ENCODE measurements at regions of chr11 and their contacts with region 1.

Region 1: GRCh38 chr11:30322826-30323710 is at the start of gene ARL14EP:
- DNase-seq: peak; percentile 94
- H3K4me3 ChIP-seq: peak within 1 kb of the TSS; percentile 53 to 88 (median 62)
- H3K27ac ChIP-seq: peak within 1 kb of the TSS; percentile 93
- H3K4me1 ChIP-seq: peaks cover 10% of the 10 kb centered on the region
- H3K27me3 ChIP-seq: peaks cover 3 to 8% of the 10 kb centered on the region in 2 experiments
- CTCF ChIP-seq: no peak
- POLR2A ChIP-seq: peak; percentile 86
- total RNA-seq, gene ARL14EP: 14.8 and 16.7 TPM in 2 replicates

Region 2: DNA sequence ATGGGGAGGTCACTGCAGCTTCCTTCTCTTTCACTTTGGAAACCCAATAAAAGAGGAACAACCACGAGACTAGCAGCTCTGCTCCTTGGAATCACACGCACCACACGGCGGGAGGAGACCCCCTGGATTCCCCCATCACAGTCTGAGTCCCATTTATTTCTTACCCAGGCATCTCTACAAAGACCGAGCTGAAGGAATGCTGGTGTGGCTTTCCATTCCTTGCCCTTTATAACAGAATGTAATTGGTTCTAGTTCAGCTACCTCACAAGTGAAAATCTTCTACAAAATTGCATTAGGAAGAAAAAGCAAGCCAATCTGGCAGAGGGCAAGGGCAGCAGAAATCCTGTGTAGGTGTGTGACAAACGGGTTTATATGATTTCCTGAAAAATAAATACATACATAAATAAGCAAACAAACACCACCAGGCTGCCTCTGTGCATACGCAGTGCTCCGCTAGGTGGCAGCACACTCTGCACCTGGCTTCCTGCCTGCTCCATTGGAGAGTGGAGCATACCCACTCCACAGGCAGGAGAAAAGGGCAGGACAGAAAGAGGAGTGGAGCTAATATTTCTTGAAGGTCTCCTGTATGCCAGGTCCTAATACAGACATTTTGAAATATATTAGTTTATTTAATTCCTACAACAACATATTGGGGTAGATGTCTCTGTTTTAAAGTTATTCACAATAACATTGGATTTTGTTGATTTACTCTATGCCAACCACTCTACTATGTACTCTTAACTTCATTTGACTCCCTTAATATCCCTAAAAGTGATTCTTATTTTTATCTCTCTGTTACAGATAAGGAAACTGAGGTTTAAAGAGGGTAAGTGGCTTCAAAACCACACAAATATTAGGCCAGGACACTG is 979.4 kb before region 1 on chr11:
- CTCF ChIA-PET with region 1: no interaction called
- POLR2A ChIA-PET with region 1: no interaction called
- dilution Hi-C with region 1: no loop called
- intact Hi-C with region 1: loop called (anchors 10 kb)
- DNase-seq: peak; percentile 58
- H3K4me3 ChIP-seq: no peak overlapping the region
- H3K27ac ChIP-seq: no peak overlapping the region
- H3K4me1 ChIP-seq: no peaks in the 10 kb centered on the region
- H3K27me3 ChIP-seq: no peaks in the 10 kb centered on the region
- CTCF ChIP-seq: peak; percentile 88 to 94
- POLR2A ChIP-seq: no peak

Region 3: DNA sequence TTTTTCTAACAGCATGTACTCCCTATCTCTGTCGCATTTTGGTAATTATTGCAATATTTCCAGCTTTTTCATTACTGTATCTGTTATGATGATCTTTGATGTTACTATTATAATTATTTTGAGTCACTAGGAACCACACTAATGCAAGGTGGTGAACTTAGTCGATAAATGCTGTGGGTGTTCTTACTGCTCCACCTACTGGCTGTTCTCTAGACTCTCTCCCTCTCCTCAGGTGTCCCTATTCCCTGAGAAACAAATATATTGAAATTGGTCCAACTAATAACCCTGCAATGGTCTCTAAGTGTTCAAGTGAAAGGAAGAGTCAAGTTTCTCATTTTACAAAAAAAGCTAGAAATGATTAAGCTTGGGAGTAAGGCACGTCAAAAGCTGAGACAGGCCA is 10.3 kb after region 1 on chr11:
- CTCF ChIA-PET with region 1: interaction called, 10 read pairs
- POLR2A ChIA-PET with region 1: interaction called, 6 read pairs
- dilution Hi-C with region 1: no loop called
- intact Hi-C with region 1: no loop called
- DNase-seq: no peak
- H3K4me3 ChIP-seq: no peak overlapping the region
- H3K27ac ChIP-seq: no peak overlapping the region
- H3K4me1 ChIP-seq: no peaks in the 10 kb centered on the region
- H3K27me3 ChIP-seq: no peaks in the 10 kb centered on the region
- CTCF ChIP-seq: peak in 1 of 2 donors; percentile 37
- POLR2A ChIP-seq: no peak

Region 4: DNA sequence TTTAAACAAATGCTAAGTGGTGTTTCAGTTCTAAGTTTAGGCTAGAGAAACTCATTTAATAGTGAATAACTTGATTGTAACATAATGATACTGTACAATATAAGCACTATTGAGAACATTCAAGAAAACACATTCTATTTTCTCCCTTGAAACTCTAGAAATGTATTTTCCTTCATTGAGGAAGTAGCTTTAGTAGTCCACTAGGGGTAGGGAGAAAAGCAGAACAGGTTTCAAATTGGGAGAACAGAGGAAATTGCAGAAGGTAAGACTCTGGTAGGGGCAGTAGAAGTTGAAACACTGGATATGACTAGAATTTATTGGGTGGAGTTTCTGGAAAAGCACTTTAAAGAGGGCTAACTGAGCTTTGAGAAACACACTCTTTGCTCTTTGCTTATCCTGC is 294.7 kb after region 1 on chr11:
- CTCF ChIA-PET with region 1: no interaction called
- POLR2A ChIA-PET with region 1: no interaction called
- dilution Hi-C with region 1: no loop called
- intact Hi-C with region 1: no loop called
- DNase-seq: no peak
- H3K4me3 ChIP-seq: no peak overlapping the region
- H3K27ac ChIP-seq: no peak overlapping the region
- H3K4me1 ChIP-seq: no peaks in the 10 kb centered on the region
- H3K27me3 ChIP-seq: no peaks in the 10 kb centered on the region
- CTCF ChIP-seq: no peak
- POLR2A ChIP-seq: no peak

Region 5: DNA sequence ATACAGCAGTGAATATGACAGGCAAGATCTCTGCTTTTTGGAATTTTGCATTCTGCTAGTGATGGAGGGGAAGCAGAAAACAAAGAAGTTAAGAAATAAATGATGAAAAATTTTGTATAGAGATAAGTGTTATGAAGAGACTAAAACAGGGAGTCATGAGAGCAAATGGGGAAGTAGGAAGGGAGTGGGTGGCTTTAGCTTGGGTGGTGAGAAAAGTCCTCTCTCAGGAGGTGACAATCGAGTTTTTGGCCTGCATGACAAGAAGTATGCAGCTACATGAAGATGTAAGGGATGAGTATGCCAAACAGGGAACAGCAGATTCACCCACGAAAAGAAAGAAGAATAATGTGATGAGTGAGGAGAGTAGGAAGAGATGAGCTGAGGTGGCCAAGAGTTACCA is 343.7 kb after region 1 on chr11:
- CTCF ChIA-PET with region 1: no interaction called
- POLR2A ChIA-PET with region 1: no interaction called
- dilution Hi-C with region 1: no loop called
- intact Hi-C with region 1: no loop called
- DNase-seq: no peak
- H3K4me3 ChIP-seq: no peak overlapping the region
- H3K27ac ChIP-seq: no peak overlapping the region
- H3K4me1 ChIP-seq: no peaks in the 10 kb centered on the region
- H3K27me3 ChIP-seq: no peaks in the 10 kb centered on the region
- CTCF ChIP-seq: no peak
- POLR2A ChIP-seq: no peak

Region 6: GRCh38 chr11:30758012-30758411 is 434.9 kb after region 1 on chr11:
- CTCF ChIA-PET with region 1: no interaction called
- POLR2A ChIA-PET with region 1: no interaction called
- dilution Hi-C with region 1: no loop called
- intact Hi-C with region 1: loop called (anchors 10 kb)
- DNase-seq: peak; percentile 70
- H3K4me3 ChIP-seq: no peak overlapping the region
- H3K27ac ChIP-seq: no peak overlapping the region
- H3K4me1 ChIP-seq: peaks cover 9% of the 10 kb centered on the region
- H3K27me3 ChIP-seq: no peaks in the 10 kb centered on the region
- CTCF ChIP-seq: no peak
- POLR2A ChIP-seq: no peak

Region 7: DNA sequence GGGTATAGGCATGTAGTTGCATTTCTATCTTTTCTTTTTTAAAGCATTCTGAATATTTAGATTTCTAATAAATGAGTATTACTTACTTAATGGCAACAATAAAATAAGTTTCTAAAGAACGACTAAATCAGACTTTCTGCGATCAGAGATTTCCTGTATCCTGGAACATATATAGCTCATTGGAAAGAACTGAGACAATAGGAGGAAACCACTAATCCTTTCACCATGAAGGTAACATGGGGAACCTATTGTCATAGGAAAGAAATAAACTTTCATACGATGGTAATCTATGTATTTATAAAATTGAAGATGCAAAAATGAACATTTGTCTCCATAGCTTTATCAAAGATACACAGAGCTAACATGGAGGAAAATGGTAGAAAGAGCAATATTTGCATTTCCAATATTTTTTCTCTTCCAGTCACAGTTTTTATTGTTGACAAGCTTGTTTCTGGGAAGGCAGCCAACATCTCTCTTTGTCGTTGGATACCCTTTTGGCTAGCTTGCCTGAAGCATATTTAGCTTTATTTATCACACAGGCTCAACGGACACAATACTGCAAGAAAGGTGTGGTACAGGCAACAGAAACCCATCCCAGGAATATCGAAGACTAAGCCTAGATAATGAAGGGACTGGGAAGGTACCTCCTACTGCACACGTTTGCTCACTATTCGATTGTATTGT is 556.4 kb after region 1 on chr11:
- CTCF ChIA-PET with region 1: no interaction called
- POLR2A ChIA-PET with region 1: no interaction called
- dilution Hi-C with region 1: no loop called
- intact Hi-C with region 1: loop called (anchors 10 kb)
- DNase-seq: peak; percentile 83
- H3K4me3 ChIP-seq: peak overlapping the region in 1 of 3 experiments; percentile 39
- H3K27ac ChIP-seq: peak overlapping the region; percentile 29
- H3K4me1 ChIP-seq: peaks cover 16% of the 10 kb centered on the region
- H3K27me3 ChIP-seq: no peaks in the 10 kb centered on the region
- CTCF ChIP-seq: no peak
- POLR2A ChIP-seq: no peak